GM12878 (cell line): ENCODE measurements at regions of chr11 and their contacts with region 1.

Region 1: DNA sequence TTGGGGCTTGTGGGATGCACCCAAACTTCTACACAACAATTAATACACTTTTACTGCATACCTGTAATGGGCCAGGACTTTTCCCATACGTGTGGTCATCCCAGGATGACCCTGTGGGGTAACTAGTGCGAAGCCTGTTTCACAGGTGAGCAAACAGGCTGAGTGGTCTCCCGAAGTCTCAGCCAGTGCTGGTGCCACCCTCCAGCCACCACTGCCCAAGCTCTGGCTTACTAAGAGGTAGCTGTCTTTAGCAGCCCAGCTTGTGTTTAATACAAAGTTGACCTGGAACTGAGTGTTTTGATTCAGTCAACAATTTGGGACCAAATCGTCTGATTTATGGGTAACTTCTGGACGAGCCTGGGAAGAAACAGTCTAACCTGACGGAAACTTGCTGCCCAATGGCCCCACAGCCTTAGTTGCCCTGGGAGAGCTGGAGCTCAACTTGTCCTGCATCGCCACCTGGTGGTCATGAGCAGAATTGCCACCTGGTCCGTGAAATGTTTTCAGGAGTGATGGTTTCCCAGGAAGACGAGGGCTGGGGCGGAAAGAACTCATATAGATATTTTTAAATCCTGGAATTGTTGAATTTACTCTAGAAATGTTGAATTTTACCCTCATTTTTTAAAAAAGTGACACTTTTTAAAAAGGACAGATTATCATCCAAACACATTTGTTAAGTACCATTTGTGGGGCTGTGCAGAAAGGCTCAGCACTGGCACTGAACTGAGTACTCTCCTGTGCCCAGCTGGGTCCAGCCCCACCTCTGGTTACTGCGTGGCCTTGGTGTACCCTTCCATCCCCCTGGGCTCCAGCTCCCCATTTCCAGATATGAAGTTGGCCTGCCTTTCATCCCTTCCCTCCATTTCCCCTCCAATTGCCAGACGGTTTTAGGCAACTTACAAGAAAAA is 95.5 kb upstream of the PARVA start:
- DNase-seq: peak; percentile 21
- ATAC-seq: peak; percentile 89
- H3K4me3 ChIP-seq: no peak overlapping the region
- H3K27ac ChIP-seq: no peak overlapping the region
- H3K4me1 ChIP-seq: no peaks in the 10 kb centered on the region
- H3K27me3 ChIP-seq: no peaks in the 10 kb centered on the region; a peak in 1 of 4 replicates
- CTCF ChIP-seq: peak; percentile 87 to 95 (median 93)
- EP300 ChIP-seq: no peak
- POLR2A ChIP-seq: no peak
- RAD21 ChIP-seq: peak; percentile 100

Region 2: DNA sequence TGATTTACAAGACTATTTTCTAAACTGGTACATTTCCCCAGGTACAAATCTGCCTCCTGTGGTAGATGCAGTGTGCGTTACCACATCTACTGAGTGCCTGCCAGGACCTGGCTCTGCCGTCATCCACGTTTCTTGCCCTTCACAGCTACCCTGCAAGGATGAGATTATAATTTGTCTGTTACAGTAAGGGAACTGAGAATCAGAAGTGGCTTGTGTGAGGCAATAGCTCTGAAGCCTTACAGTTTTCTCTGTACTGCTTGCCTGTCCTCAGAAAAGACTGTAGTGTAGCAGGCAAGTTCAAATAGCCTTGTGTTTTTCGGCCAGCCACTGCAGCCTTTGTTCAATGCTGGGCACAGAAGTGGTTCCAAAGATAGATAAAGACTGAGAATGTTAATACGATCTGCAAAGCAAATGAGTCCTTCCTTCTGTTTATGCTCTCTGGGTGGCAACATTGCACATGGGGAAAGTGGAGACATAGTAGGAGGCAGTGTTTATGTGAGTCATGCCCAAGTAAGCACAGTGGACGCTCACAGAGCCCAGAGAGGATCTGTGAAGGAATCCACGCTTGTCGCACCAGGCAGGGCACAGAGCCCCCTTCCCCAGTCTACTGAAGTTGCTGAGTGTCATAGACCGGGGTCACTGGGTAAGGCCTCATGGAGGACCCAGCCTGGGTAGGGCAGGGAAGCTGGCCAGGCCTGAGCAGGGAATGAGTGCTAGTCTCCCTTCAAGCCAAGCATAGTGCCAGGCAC is 122.3 kb before region 1 on chr11:
- CTCF ChIA-PET with region 1: interaction called, 20 read pairs
- POLR2A ChIA-PET with region 1: no interaction called
- RAD21 ChIA-PET with region 1: interaction called, 9 read pairs
- SMC1A ChIA-PET with region 1: interaction called, 9 read pairs
- in situ Hi-C with region 1: no loop called
- intact Hi-C with region 1: loop called (anchors 5 kb)
- DNase-seq: no peak
- ATAC-seq: peak; percentile 46
- H3K4me3 ChIP-seq: no peak overlapping the region
- H3K27ac ChIP-seq: no peak overlapping the region
- H3K4me1 ChIP-seq: no peaks in the 10 kb centered on the region
- H3K27me3 ChIP-seq: no peaks in the 10 kb centered on the region
- CTCF ChIP-seq: no peak
- EP300 ChIP-seq: no peak
- POLR2A ChIP-seq: no peak
- RAD21 ChIP-seq: no peak

Region 3: GRCh38 chr11:12167098-12168000 is 114.5 kb before region 1 on chr11:
- CTCF ChIA-PET with region 1: interaction called, 20 read pairs
- POLR2A ChIA-PET with region 1: no interaction called
- RAD21 ChIA-PET with region 1: interaction called, 9 read pairs
- SMC1A ChIA-PET with region 1: interaction called, 9 read pairs
- in situ Hi-C with region 1: no loop called
- intact Hi-C with region 1: loop called (anchors 5 kb)
- DNase-seq: no peak
- ATAC-seq: no peak
- H3K4me3 ChIP-seq: no peak overlapping the region
- H3K27ac ChIP-seq: no peak overlapping the region
- H3K4me1 ChIP-seq: no peaks in the 10 kb centered on the region
- H3K27me3 ChIP-seq: no peaks in the 10 kb centered on the region
- CTCF ChIP-seq: no peak
- EP300 ChIP-seq: no peak
- POLR2A ChIP-seq: no peak
- RAD21 ChIP-seq: no peak

Region 4: DNA sequence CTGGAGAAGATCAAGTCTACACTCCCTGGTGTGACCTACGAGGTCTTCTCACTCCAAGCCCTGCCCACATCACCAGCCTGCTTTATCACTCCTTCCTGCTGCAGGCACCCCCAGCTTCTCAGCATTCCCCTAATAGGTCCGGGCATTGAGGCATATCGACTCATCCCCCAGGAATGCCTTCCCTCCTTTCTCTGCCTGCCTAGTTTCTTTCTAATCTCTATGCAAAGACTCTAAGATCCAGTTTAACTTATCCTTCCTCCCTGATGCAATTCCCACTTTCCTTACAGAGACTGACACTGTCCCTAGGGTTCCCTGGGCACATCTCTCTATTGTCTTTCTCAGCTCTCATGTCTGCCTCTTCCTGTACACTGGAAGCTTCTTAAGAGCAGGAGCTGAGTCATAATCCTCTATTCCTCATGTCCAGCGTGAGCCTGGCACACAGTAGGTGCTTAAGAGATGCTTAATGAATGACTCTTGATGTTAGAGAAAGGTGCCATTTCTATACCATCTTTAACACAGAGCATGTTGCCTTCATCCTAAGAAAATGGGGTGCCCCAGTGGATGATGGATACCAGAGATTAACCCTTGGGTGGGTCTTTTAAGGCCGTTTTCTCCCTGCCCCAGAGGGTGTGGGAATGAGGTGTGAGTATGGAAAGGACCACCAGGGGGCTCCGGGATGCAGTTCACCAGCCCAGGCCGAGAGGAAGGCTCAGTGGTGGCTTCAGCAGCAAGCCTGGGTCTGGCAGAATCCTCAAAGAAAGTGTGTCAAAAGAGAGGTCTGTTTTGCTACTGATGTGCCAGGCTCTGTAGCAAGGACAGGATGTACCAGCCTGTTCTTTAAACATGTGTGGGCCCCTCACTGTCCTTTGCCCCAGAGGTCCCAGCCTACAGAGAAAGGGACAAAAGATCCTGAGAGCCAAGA is 130.2 kb after region 1 on chr11:
- CTCF ChIA-PET with region 1: no interaction called
- POLR2A ChIA-PET with region 1: no interaction called
- RAD21 ChIA-PET with region 1: no interaction called
- SMC1A ChIA-PET with region 1: no interaction called
- in situ Hi-C with region 1: no loop called
- intact Hi-C with region 1: no loop called
- DNase-seq: no peak
- ATAC-seq: peak; percentile 86
- H3K4me3 ChIP-seq: no peak overlapping the region
- H3K27ac ChIP-seq: no peak overlapping the region
- H3K4me1 ChIP-seq: no peaks in the 10 kb centered on the region
- H3K27me3 ChIP-seq: no peaks in the 10 kb centered on the region; a peak in 1 of 4 replicates
- CTCF ChIP-seq: peak; percentile 26 to 51 (median 50); a peak in 5 of 6 replicates
- EP300 ChIP-seq: no peak
- POLR2A ChIP-seq: no peak
- RAD21 ChIP-seq: peak; percentile 40; the same call in 1 of the 2 replicates